ENCODE measurements at regions of chr5 and their contacts with region 1.

Region 1: DNA sequence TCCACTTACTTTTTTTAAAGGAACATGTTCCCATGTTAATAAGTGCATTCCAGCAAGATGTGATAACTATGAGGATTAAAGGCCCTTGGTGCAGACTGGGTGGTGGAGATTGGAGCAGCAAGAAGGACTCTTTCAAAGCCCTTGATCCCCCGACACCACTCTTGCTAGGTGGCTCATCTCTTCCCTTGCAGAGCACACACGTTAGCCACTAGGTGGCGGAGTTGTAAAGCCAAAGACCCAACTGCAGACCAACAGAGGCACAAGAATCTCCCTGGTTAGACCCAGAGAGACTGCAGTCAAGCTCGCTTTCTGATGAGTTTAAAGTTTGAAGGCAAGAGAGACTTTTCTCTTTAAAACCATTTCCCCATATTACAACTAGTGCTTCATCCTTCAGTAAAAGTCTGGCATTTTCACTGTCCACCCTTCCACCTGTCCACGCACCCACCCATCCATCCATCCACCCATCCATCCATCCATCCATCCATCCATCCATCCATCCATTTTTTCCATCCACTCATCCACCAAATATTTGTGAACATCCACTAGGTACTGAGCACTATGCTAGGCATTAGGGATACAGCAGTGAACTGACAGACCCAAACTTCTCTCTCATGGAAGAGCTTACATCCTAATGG is 226.9 kb downstream of the MSX2 start:
- DNase-seq: no peak
- H3K4me3 ChIP-seq: no peak overlapping the region
- H3K27ac ChIP-seq: no peak overlapping the region
- H3K4me1 ChIP-seq: no peaks in the 10 kb centered on the region
- H3K27me3 ChIP-seq: no peaks in the 10 kb centered on the region
- CTCF ChIP-seq: peak; percentile 49 to 72 (median 58)
- POLR2A ChIP-seq: no peak

Region 2: DNA sequence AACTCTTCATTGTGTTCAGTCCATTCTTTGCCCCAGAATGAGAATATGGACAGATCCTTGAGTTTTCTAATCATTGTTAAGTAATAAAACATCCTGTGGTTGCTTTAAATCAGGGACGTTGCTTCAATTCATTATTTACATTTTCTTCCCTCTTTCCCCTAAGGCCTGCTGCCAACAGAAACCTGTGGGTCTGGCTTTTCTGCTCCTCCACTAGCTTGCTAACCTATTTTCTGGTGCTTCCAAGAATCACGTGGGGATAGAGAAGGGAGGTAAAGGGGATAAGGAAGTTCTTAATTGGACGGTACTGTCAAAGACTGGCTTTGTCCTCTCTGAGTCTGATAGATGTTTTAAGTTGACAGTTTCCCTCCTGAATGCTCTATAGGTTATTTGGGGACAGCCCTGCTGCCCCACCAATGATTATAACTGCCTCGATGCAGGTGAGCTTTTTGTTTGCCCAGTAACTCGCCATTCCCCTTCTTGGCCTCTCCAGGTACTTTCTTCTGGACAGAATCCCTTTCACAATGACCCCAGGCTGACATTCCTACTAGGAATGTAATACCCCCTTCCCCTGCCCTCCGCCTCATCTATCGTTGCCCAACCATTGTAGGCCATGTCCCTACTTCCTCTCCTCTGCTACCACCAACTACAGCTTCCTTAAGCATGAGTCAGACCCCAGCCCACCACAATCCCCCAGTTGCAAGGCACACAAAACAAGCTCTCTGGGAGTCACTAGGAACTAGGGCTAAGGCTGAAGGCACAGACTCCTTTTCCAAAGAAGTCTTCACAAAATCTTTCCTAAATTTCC is 1083.0 kb before region 1 on chr5:
- intact Hi-C with region 1: no loop called
- DNase-seq: no peak
- H3K4me3 ChIP-seq: no peak overlapping the region
- H3K27ac ChIP-seq: no peak overlapping the region
- H3K4me1 ChIP-seq: no peaks in the 10 kb centered on the region
- H3K27me3 ChIP-seq: no peaks in the 10 kb centered on the region
- CTCF ChIP-seq: no peak
- POLR2A ChIP-seq: no peak

Region 3: GRCh38 chr5:175365866-175366265 is 414.6 kb after region 1 on chr5:
- intact Hi-C with region 1: no loop called
- DNase-seq: no peak
- H3K4me3 ChIP-seq: no peak overlapping the region
- H3K27ac ChIP-seq: no peak overlapping the region
- H3K4me1 ChIP-seq: no peaks in the 10 kb centered on the region
- H3K27me3 ChIP-seq: no peaks in the 10 kb centered on the region
- CTCF ChIP-seq: no peak
- POLR2A ChIP-seq: no peak

Region 4: DNA sequence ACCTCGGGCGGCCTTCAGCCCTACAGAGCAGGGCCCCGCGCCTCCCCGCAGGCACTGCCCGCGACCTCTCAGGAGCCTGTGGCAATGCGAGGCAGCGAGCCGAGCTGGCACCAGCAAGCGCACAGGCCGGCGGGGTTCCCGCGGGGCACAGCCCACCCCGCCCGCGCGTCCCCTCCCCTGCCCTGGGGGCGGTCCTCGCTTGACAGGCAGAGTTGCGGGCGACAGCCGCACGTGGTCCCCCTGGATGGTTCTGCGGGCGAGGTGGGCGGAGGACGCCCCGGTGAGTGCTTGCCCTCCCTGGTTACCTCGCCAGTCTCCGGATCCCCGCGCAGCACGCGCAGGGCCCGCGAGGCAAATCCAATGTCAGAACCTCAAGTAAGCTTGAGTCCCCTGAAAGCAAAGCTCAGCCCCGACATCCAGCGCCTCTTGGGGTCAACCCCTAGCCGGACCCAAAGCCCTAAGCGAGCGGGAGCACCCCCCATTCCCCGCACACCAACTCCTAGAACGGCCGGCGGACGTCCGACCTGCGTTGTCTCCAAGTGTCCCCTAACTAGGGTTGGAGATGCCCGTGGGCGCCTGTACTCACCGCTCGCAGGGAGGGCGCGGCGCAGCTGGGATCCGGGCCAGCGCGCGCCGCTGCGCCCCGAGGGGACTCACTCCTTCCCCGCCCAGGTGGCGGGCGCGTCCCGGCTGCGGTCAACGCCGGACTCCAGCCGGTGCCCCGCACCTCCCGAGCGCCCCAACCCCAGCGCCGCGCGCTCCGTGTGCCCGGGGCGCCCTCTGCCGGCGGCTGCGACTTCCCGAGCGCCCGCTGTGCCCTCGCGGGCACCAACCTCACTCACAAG is 493.0 kb after region 1 on chr5 and contains the start of gene DRD1:
- intact Hi-C with region 1: loop called (anchors 5 kb)
- DNase-seq: no peak
- H3K4me3 ChIP-seq: peak within 1 kb of the TSS; percentile 38 to 44
- H3K27ac ChIP-seq: no peak within 1 kb of the TSS
- H3K4me1 ChIP-seq: peaks cover 17% of the 10 kb centered on the region
- H3K27me3 ChIP-seq: no peaks in the 10 kb centered on the region
- CTCF ChIP-seq: peak; percentile 24 to 62 (median 27)
- POLR2A ChIP-seq: no peak
- total RNA-seq, gene DRD1: not detected

Measured in vagina (tissue), 2 donors.